ENCODE measurements at regions of chr16 and their contacts with region 1.

Region 1: DNA sequence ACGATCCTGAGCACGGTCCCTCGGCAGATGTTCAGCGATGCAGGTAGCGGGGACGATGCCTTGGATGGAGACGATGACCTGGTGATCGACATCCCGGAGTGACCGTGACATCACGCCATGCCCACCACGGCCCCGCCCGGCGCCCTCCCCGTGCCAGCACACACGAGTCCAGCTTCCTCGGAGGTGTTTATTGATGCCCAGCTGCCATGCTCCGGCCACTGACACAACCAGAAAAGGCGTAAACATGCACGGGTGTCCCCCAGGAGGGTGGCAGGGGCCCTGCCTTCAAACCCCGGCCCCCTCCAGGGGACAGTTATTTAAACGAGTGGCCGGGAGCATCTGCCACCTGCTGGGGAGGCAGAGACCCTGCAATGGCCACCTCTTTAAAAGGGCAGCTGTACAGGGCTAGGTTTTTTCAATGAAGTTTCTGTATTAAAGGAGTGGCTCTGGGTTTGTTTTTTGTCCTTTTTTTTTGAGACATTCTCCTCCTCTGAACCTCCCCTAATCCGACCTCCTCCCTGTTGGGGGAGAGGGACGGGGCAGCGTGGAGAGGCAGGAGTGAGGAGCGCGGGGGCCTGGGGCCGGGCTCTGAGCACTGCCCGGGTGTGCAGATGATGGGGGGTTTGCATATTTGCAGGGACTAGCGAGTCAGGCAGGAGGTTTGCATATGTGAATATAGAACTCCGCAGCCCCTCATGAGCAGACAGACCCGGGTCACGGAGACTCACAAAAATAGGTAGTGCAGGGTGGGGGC is 5.3 kb downstream of the DOC2A start:
- DNase-seq: no peak
- H3K4me3 ChIP-seq: no peak overlapping the region
- H3K27ac ChIP-seq: no peak overlapping the region
- H3K4me1 ChIP-seq: peaks cover 0 to 27% (median 19%) of the 10 kb centered on the region in 6 donors
- H3K27me3 ChIP-seq: peaks cover 0 to 25% (median 15%) of the 10 kb centered on the region in 7 donors
- CTCF ChIP-seq: peak; percentile 61 to 88 (median 77)
- POLR2A ChIP-seq: no peak

Region 2: DNA sequence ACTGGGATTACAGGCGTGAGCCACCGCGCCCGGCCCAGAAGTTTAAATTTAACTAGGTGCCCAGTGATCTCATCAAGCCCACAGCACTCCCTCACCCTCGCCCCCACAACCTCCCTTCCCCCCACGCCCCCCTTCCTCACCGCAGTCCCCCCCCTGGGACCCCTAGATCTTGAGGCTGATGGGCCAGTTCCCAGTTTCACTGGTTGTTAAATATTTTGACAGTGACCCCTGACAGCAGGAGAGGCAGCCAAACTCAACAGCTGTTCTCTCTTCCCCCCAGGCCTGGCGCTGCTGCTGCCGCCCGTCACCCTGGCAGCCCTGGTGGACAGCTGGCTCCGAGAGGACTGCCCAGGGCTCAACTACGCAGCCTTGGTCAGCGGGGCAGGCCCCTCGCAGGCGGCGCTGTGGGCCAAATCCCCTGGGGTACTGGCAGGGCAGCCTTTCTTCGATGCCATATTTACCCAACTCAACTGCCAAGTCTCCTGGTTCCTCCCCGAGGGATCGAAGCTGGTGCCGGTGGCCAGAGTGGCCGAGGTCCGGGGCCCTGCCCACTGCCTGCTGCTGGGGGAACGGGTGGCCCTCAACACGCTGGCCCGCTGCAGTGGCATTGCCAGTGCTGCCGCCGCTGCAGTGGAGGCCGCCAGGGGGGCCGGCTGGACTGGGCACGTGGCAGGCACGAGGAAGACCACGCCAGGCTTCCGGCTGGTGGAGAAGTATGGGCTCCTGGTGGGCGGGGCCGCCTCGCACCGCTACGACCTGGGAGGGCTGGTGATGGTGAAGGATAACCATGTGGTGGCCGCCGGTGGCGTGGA is 310.9 kb before region 1 on chr16:
- intact Hi-C with region 1: loop called (anchors 5 kb)
- DNase-seq: peak; percentile 60
- H3K4me3 ChIP-seq: no peak overlapping the region
- H3K27ac ChIP-seq: peak overlapping the region in 1 of 8 donors; percentile 10
- H3K4me1 ChIP-seq: peaks cover 0 to 8% (median 6%) of the 10 kb centered on the region in 6 donors
- H3K27me3 ChIP-seq: no peaks in the 10 kb centered on the region
- CTCF ChIP-seq: no peak
- POLR2A ChIP-seq: no peak

Region 3: GRCh38 chr16:29961479-29962343 is 43.8 kb before region 1 on chr16 and contains the start of gene TMEM219:
- intact Hi-C with region 1: loop called (anchors 5 kb)
- DNase-seq: peak; percentile 97
- H3K4me3 ChIP-seq: peak within 1 kb of the TSS; percentile 52 to 92 (median 71)
- H3K27ac ChIP-seq: peak within 1 kb of the TSS; percentile 76 to 97 (median 94)
- H3K4me1 ChIP-seq: peaks cover 9 to 48% (median 27%) of the 10 kb centered on the region in 6 donors
- H3K27me3 ChIP-seq: no peaks in the 10 kb centered on the region
- CTCF ChIP-seq: peak; percentile 50 to 83 (median 75)
- POLR2A ChIP-seq: peak in 1 of 3 donors; percentile 30
- total RNA-seq, gene TMEM219: 89.3 to 135 (median 107) TPM

Region 4: DNA sequence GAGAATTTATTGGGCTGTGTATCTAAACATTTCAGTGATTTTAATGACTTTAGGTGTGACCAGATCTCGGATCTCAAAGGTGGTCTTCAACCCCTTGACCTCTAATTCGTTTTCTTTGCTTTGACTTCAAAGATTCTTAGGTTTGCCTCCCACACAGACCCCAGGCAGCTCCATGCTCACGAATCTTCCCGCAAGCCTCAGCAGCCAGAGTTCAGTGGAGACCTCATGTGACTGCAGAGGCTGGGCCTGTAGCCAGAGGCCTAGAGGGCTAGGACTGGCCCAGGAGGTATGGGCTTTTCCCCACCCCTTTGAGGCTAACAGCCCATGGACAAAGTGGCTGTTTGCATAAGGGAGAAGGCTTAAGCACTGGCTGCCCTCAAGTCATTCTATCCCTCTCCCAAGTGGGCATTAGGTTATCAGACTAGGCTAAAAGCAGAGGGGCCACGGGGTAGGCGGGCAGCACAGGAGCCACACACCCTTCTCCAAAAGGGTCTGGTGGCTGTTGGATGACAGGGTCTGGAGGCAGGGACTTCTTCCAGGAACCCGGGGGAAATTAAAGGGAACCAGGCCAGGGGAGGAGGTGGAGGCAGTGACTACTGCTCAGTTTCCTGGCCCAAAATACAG is 13.1 kb before region 1 on chr16:
- intact Hi-C with region 1: no loop called
- DNase-seq: no peak
- H3K4me3 ChIP-seq: no peak overlapping the region
- H3K27ac ChIP-seq: no peak overlapping the region
- H3K4me1 ChIP-seq: peaks cover 18 to 37% (median 30%) of the 10 kb centered on the region in 6 donors
- H3K27me3 ChIP-seq: no peaks in the 10 kb centered on the region
- CTCF ChIP-seq: no peak
- POLR2A ChIP-seq: no peak

Region 5: GRCh38 chr16:30082545-30083090 is 77.1 kb after region 1 on chr16:
- intact Hi-C with region 1: no loop called
- DNase-seq: no peak
- H3K4me3 ChIP-seq: no peak overlapping the region
- H3K27ac ChIP-seq: no peak overlapping the region
- H3K4me1 ChIP-seq: peaks cover 8 to 59% (median 28%) of the 10 kb centered on the region in 6 donors
- H3K27me3 ChIP-seq: no peaks in the 10 kb centered on the region
- CTCF ChIP-seq: no peak
- POLR2A ChIP-seq: no peak